ENCODE measurements at regions of chr10 and their contacts with region 1.

Region 1: DNA sequence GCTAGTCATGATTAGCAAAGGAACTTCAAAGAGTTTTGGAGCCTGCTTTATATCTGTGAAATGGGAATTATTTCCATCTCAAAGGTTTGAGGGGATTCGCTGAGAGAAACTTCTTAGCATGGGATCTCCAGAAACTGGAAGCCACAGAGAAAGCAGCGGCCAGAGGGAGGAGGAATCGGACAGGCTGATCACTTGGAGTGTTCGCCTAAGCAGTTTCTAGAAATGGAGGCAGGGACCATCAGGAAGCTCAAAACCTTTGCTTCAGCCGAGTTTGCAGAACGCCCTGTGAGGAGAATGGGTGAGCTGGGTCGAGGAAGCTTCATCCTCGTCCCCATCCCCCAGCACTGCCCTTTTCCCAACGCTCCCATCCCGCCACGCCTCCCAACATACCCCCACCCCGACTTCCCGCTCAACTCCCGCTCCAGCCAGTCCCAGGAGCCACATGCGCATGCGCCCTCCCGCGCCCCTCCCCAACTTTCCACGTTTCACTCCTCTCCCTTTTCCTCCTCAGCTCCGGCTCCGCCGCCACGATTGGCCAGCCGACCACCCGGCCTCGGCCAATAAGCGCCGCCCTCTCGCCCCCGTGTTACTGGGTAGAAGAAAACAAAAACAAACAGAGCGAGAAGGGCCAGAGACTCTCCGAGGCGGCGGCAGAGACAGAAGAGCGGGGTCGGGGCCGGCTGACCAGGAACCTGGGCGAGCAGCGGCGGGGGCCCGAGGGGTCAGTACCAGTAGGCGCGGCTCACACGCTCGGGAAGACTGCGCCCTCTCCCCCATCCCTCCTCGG is at the start of gene PDCD4:
- DNase-seq: peak; percentile 98 to 99
- ATAC-seq: peak; percentile 93 to 96
- H3K4me3 ChIP-seq: peak within 1 kb of the TSS; percentile 71 to 100 (median 88)
- H3K27ac ChIP-seq: peak within 1 kb of the TSS; percentile 85 to 96 (median 96)
- H3K4me1 ChIP-seq: peaks cover 9 to 20% of the 10 kb centered on the region in 2 donors
- H3K27me3 ChIP-seq: no peaks in the 10 kb centered on the region
- CTCF ChIP-seq: no peak
- POLR2A ChIP-seq: peak; percentile 77 to 95
- total RNA-seq, gene PDCD4: 6.4 to 15.6 (median 9.8) TPM

Region 2: DNA sequence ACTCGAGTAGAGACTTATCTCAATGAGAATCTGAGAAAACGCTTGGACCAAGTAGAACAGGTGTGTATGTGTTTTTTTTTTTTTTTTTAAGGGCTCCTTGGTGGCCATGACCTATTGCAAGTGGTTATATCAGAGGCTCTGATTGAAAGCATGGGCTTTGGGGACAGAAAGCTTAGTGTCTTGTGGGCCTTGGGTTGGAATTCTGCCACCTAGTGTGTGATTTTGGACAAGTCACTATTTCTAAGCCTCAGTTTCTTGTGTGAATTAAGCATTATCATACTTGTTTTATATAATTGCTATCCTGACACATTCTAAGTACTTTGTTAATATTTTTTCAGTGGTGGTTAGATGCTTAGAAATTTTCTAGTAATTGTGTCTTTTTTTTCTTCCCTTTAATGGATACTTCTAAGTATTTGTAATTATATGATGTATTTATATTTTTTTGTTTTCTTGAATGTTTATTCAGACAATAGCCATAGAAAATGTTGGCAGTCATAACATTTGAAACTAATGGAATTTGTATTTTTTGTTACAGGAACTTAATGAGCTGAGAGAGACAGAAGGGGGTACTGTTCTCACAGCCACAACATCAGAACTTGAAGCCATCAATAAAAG is 270.9 kb before region 1 on chr10:
- in situ Hi-C with region 1: loop called in 2 of 4 experiments (anchors 25 kb)
- intact Hi-C with region 1: loop called (anchors 10 kb)
- DNase-seq: no peak
- ATAC-seq: no peak
- H3K4me3 ChIP-seq: no peak overlapping the region
- H3K27ac ChIP-seq: no peak overlapping the region
- H3K4me1 ChIP-seq: no peaks in the 10 kb centered on the region
- H3K27me3 ChIP-seq: no peaks in the 10 kb centered on the region
- CTCF ChIP-seq: no peak
- POLR2A ChIP-seq: no peak

Region 3: DNA sequence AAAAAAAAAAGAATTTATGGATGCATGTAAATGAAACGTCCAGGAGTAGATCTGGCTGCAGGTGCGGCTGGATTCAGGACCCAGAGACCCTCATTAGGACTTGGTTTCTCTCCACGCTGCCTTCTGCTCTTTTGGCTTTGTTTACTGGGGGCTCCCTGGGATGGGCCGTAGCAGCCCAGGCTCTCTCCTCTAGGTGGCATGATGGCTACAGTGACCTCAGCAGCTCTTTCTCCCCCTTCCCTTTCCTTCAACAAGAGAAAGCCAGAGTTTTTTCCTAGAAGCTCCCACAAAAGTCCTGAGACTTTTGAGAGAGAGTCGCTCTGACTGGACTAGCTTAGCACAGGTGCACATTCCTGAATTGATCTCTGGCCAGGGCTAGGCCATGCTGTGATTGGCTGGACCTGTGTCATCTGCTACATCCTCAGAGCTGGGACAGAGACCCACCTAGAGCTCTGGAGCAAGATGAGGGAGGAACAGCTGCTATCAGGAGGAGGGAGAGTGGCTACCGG is 67.6 kb before region 1 on chr10:
- in situ Hi-C with region 1: loop called in 1 of 4 experiments (anchors 10 kb)
- intact Hi-C with region 1: no loop called
- DNase-seq: no peak
- ATAC-seq: peak; percentile 41 to 54
- H3K4me3 ChIP-seq: no peak overlapping the region
- H3K27ac ChIP-seq: no peak overlapping the region
- H3K4me1 ChIP-seq: peaks cover 3 to 9% of the 10 kb centered on the region in 2 donors
- H3K27me3 ChIP-seq: no peaks in the 10 kb centered on the region
- CTCF ChIP-seq: peak; percentile 36 to 60 (median 49)
- POLR2A ChIP-seq: no peak

Region 4: DNA sequence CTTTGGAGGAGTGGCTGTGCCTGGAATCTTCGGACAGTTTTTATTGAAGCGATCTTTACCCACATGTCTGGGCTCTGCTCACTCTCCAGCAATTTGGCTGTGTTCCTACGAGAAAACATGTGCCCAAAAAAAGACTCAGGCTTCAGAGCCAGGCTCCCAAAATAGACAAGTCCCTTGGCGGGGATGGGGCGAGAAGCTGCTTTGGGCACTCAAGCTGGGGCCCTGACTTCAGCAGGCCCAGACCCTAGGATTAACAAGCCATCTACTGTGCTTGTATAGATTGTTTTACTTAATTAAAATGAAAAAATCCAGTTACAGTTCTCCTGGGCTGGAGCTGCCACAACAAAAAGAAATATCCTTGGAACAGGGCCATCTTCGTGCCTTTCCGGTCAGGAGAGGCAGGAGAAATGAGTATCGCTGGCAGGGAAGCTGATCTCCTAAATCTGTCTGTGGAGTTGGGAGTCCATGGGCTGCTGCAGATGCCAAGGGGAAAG is 51.1 kb before region 1 on chr10:
- in situ Hi-C with region 1: no loop called
- intact Hi-C with region 1: loop called (anchors 1 kb)
- DNase-seq: peak; percentile 76 to 87
- ATAC-seq: peak; percentile 88
- H3K4me3 ChIP-seq: no peak overlapping the region
- H3K27ac ChIP-seq: peak overlapping the region; percentile 87 to 96 (median 90)
- H3K4me1 ChIP-seq: peaks cover 74 to 79% of the 10 kb centered on the region in 2 donors
- H3K27me3 ChIP-seq: no peaks in the 10 kb centered on the region
- CTCF ChIP-seq: no peak
- POLR2A ChIP-seq: peak in 1 of 2 donors; percentile 20

Region 5: GRCh38 chr10:110918643-110919363 is 47.3 kb after region 1 on chr10 and contains the start of gene BBIP1:
- in situ Hi-C with region 1: no loop called
- intact Hi-C with region 1: loop called (anchors 2 kb)
- DNase-seq: no peak
- ATAC-seq: peak; percentile 89 to 92
- H3K4me3 ChIP-seq: peak within 1 kb of the TSS; percentile 73 to 96 (median 92)
- H3K27ac ChIP-seq: peak within 1 kb of the TSS; percentile 95 to 100 (median 98)
- H3K4me1 ChIP-seq: peaks cover 37 to 45% of the 10 kb centered on the region in 2 donors
- H3K27me3 ChIP-seq: no peaks in the 10 kb centered on the region
- CTCF ChIP-seq: peak in 1 of 5 experiments; percentile 1
- POLR2A ChIP-seq: peak; percentile 61 to 63
- total RNA-seq, gene BBIP1: 8.9 to 15.3 (median 11.7) TPM

Measured in gastrocnemius medialis (tissue), 4 donors.